ENCODE measurements at regions of chr12 and their contacts with region 1.

Region 1: GRCh38 chr12:64864319-64864718 is 39.9 kb downstream of the TBC1D30 start:
- DNase-seq: no peak
- CTCF ChIP-seq: no peak

Region 2: DNA sequence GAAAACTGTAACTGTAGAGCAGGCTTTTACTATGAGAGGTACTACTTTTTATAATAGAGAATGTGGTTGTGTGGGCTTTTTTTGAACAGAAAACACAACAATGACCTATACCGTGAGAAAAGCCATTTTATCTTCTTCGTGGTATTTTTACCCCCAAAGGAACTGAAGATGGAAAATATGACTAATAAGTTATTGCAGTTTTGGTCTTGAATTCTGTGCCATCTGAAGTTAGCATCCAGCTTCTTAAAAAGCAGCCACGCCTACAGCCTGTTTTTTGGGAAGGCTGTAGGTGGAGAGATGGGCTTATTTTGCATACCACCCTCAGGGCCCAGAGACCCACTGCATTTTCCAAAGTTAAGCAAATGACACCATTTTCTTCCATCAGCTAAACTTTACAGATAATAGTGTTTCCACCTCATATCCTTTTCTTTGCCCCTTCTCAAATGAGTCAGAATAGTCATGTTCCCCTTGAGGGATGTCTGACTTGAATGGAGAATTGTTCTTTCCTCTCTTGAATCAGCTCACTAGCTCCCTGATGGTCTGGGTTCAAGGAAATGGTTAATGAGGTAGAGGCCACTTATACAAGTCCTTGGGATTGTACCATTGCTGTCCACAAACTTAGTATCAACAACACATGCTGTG is 13.2 kb after region 1 on chr12:
- CTCF ChIA-PET with region 1: interaction called, 14 read pairs
- POLR2A ChIA-PET with region 1: no interaction called
- DNase-seq: peak; percentile 63
- CTCF ChIP-seq: no peak

Measured in GM10248 (cell line).